ENCODE measurements at regions of chr6 and their contacts with region 1.

Region 1: GRCh38 chr6:35139908-35140655 is 1.1 kb downstream of the TCP11 start:
- DNase-seq: peak in 2 of 6 donors; percentile 16 to 51
- ATAC-seq: peak; percentile 56 to 87 (median 82)
- H3K4me3 ChIP-seq: no peak overlapping the region
- H3K27ac ChIP-seq: no peak overlapping the region
- H3K4me1 ChIP-seq: no peaks in the 10 kb centered on the region
- H3K27me3 ChIP-seq: peaks cover 0 to 5% (median 0%) of the 10 kb centered on the region in 4 donors
- CTCF ChIP-seq: peak; percentile 16 to 61 (median 44)

Region 2: GRCh38 chr6:34986845-34987246 is 153.2 kb before region 1 on chr6:
- intact Hi-C with region 1: loop called in 2 of 3 experiments (anchors 5 kb)
- DNase-seq: peak in 5 of 6 donors; percentile 21 to 62 (median 48)
- ATAC-seq: peak; percentile 55 to 87 (median 82)
- H3K4me3 ChIP-seq: no peak overlapping the region
- H3K27ac ChIP-seq: no peak overlapping the region
- H3K4me1 ChIP-seq: no peaks in the 10 kb centered on the region
- H3K27me3 ChIP-seq: no peaks in the 10 kb centered on the region
- CTCF ChIP-seq: peak; percentile 56 to 80 (median 68)

Region 3: DNA sequence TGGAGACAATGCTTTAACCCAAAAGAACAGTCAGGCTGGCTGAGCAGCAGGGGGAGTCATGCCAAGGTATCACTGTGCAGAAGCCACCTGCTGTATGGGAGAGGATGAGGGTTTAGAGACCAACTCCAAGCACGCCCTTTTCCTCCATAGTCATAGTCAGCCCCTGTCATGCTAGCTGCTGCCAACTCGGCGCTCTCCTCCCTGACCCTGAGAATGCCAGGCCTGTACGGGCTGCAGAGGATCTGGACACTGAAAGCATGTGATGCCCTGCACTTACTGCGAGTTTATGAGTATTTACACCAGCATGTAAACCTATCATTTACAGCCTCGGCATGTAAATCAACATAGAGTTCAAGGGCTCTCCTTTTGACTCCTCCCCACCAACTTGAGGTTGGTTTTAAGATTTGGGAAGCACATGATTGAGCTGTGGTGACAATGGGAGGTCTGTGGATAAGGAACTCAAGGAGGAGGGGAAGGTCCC is 62.0 kb after region 1 on chr6:
- intact Hi-C with region 1: loop called in 1 of 3 experiments (anchors 10 kb)
- DNase-seq: peak in 1 of 6 donors; percentile 28
- ATAC-seq: no peak
- H3K4me3 ChIP-seq: no peak overlapping the region
- H3K27ac ChIP-seq: no peak overlapping the region
- H3K4me1 ChIP-seq: no peaks in the 10 kb centered on the region
- H3K27me3 ChIP-seq: no peaks in the 10 kb centered on the region
- CTCF ChIP-seq: no peak